Activated B cell treated with CpG ODN at 0.5 μM for 24 hours (primary cell): ENCODE measurements at regions of chr2 and their contacts with region 1.

Region 1: DNA sequence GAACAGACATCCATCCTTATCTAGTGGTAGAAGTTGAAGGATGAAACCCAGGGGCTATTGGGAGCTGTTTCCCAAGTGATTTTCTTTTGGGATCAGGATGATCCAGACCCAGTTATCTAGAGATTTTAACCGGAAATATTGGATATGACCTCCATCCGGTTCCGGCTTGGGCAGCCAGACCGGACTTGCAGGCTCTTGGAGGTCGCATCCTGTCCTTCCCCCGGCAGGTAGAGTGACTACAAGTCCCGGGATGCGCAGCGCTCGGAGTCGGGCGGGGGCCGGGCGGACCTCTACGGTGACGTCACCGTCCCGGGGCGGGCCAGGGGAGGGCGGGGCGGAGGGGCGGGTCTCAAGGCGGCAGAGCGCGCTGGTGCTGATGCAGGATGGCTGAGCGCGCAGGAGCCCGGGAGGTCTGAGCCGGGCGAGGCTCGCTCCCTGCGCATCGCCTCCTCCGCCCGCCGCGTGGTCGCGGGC is at the start of gene KIF5C:
- DNase-seq: peak; percentile 68
- ATAC-seq: peak; percentile 93
- H3K4me3 Mint-ChIP-seq: peak within 1 kb of the TSS; percentile 82
- H3K27ac Mint-ChIP-seq: no peak within 1 kb of the TSS
- H3K4me1 Mint-ChIP-seq: peaks cover 14% of the 10 kb centered on the region
- H3K27me3 Mint-ChIP-seq: peaks cover 39% of the 10 kb centered on the region
- CTCF ChIP-seq: no peak
- total RNA-seq, gene KIF5C: 1.4 and 2.6 TPM in 2 replicates

Region 2: DNA sequence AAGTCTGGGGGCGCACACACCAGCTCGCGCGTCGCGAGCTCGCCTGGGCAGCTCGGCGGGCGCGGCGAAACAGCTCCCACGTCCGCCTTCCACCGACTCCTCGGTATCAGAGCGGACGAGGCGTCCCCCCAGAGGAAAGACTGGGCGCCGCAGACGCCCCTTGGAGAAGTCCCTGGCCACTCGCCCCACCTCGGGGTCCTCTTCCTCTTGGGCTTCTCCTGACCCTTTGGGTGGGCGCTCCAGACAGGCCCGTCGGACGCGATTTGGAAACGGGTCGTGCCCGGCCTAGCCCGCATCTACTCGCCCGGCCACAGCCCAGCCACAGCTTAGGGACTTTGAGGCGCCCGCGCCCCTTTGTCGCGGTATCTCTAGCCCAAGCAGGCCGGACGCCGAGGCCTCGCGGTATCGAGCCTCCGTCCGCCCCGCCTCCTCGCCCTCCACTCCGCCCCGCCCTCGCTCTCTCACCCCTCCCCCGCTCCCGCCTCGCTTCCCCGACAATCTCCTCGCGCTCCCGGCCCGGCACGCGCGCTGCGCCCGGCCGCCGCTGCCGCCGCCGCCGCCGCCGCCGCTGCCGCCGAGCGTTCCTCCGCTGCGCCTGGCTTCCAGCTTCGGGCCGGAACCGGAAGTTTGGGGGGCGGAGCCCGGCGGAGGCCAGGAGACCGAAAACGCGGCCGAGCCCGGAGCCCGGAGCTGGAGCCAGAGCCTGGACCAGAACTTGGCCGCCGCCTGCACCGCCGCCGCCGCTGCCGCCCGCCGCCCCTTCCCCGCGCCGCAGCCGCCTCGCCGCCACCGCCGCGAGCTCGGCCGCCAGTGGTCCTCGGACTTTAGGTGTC is 1030.8 kb before region 1 on chr2:
- CTCF ChIA-PET with region 1: no interaction called
- POLR2A ChIA-PET with region 1: no interaction called
- intact Hi-C with region 1: loop called (anchors 5 kb)
- DNase-seq: peak; percentile 88
- ATAC-seq: peak; percentile 83
- H3K4me3 Mint-ChIP-seq: peak overlapping the region; percentile 88
- H3K27ac Mint-ChIP-seq: peak overlapping the region; percentile 80
- H3K4me1 Mint-ChIP-seq: peaks cover 29% of the 10 kb centered on the region
- H3K27me3 Mint-ChIP-seq: peaks cover 31% of the 10 kb centered on the region
- CTCF ChIP-seq: no peak

Region 3: DNA sequence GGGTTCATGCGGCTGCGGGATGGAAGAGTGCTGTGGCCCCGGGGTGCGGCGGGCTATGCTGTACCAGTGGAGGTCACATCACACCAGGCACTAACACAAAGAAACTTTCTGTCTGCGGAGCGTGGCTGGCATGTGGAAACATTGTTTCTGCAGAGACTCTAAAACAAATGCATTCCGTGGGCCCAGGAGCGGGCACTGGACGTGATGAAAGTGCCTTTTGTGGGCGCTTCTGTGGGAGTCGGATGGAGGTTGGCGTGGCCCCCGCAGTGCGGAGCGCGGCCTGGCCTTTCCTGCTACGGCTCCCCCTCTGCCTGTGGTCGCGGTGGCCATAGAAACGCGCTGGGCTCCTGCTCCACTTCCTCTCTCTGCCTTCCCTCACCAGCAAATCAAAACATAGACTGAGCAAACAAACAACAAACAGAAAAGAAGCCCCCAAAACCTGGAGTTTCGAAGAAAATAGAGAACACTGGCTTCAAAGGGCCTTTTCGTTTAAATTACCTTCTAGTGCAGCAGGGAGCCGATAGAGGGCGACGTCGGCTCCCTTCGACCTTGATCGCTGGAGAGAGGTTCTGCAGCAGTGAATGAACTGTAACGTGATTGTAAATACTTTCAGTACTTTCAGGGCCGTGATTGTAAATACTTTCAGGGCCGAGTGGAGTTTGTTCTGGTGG is 51.5 kb after region 1 on chr2:
- CTCF ChIA-PET with region 1: no interaction called
- POLR2A ChIA-PET with region 1: interaction called, 3 read pairs
- intact Hi-C with region 1: loop called (anchors 2 kb)
- DNase-seq: peak; percentile 24
- ATAC-seq: peak; percentile 88
- H3K4me3 Mint-ChIP-seq: peak overlapping the region; percentile 79
- H3K27ac Mint-ChIP-seq: peak overlapping the region; percentile 76
- H3K4me1 Mint-ChIP-seq: peaks cover 16% of the 10 kb centered on the region
- H3K27me3 Mint-ChIP-seq: no peaks in the 10 kb centered on the region
- CTCF ChIP-seq: no peak